MCF 10A (cell line): ENCODE measurements at regions of chr1 and their contacts with region 1.

Region 1: GRCh38 chr1:225999227-225999911 is at the start of gene SDE2:
- DNase-seq: peak; percentile 100
- H3K4me3 Mint-ChIP-seq: peak within 1 kb of the TSS; percentile 88
- H3K27ac Mint-ChIP-seq: peak within 1 kb of the TSS; percentile 99
- H3K4me1 Mint-ChIP-seq: peaks cover 33% of the 10 kb centered on the region
- H3K27me3 Mint-ChIP-seq: no peaks in the 10 kb centered on the region
- CTCF ChIP-seq: no peak
- total RNA-seq, gene SDE2: 59.3 and 61.8 TPM in 2 replicates

Region 2: GRCh38 chr1:226009650-226010044 is 10.3 kb after region 1 on chr1:
- CTCF ChIA-PET with region 1: interaction called, 3 read pairs
- POLR2A ChIA-PET with region 1: interaction called, 12 read pairs
- intact Hi-C with region 1: no loop called
- DNase-seq: no peak
- H3K4me3 Mint-ChIP-seq: no peak overlapping the region
- H3K27ac Mint-ChIP-seq: no peak overlapping the region
- H3K4me1 Mint-ChIP-seq: peaks cover 5% of the 10 kb centered on the region
- H3K27me3 Mint-ChIP-seq: peaks cover 27% of the 10 kb centered on the region
- CTCF ChIP-seq: no peak

Region 3: DNA sequence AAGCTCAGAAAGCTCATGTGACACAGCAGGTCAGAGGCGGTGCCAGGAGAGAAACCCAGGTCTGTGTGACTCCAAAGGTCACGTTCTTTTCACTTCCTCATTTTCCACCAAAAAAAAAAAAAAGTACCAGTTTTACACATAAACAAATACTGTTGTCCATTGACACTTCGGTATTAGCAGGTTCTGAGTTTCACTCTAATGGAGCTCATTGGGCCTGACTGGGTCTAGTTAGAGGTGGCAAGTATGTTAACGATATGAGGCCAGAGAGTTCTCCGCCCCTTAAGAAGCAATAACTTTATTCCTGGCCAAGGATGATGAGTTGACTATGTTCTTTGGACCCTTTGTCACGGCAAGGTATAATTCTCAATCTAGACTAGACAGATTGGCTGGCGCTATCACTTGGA is 29.7 kb after region 1 on chr1:
- CTCF ChIA-PET with region 1: interaction called, 3 read pairs
- POLR2A ChIA-PET with region 1: interaction called, 6 read pairs
- intact Hi-C with region 1: loop called (anchors 2 kb)
- DNase-seq: no peak
- H3K4me3 Mint-ChIP-seq: no peak overlapping the region
- H3K27ac Mint-ChIP-seq: no peak overlapping the region
- H3K4me1 Mint-ChIP-seq: peaks cover 12% of the 10 kb centered on the region
- H3K27me3 Mint-ChIP-seq: no peaks in the 10 kb centered on the region
- CTCF ChIP-seq: no peak